ENCODE measurements at regions of chr19 and their contacts with region 1.

Region 1: GRCh38 chr19:52237771-52238400 is 31.5 kb upstream of the ZNF766 start:
- DNase-seq: peak; percentile 19
- ATAC-seq: peak; percentile 79
- H3K4me3 ChIP-seq: no peak overlapping the region
- H3K27ac ChIP-seq: no peak overlapping the region
- H3K4me1 ChIP-seq: no peaks in the 10 kb centered on the region
- H3K27me3 ChIP-seq: no peaks in the 10 kb centered on the region
- CTCF ChIP-seq: peak; percentile 83 to 89 (median 88)
- EP300 ChIP-seq: no peak
- POLR2A ChIP-seq: no peak
- RAD21 ChIP-seq: peak; percentile 86

Region 2: DNA sequence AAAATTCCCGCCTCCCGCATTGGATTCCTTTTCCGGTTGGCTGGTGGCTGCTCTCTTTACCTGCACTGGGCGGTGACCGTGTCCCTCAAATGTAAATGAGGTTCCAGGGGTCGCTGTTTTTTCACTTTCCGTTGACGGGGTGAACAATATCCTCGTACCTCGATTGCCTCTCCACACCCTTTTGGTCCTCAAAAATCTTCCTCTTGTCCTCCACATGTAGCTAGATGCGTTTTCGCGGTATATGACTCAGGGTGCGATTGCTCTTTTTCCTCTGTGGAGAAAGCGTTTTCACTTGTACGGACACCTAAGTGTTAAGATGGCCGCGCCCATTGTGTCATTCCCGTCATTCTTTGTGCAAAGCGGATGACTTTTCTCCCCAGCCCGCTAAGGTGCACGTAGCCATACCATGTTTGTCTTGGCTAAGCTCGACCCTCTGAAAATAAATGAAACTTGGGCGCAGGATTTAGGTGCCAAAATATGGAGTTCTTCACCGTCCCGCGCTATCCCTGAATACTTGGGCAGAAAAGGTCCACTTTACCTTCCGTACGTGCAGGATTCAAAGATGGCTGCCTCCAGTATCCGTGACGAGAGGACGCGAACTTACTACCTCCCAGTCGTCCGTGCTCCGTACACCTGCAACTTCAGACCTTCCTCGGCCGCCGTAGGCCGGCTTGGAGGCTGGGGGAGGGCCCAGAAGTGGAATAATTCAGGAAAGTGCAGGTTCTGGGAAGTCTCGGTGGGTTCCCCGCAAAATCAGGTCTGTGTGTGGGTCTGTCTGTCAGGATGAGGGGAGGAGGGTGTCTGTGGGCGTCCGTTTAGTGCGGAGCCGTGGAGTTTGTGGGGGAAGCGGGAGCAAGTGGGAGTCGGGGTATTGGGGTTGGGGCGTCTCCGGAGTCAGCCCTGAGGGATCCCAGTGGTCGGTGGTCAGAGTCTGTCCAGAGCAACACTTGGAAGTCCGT is 310.8 kb before region 1 on chr19 and contains the start of gene ZNF613:
- CTCF ChIA-PET with region 1: no interaction called
- POLR2A ChIA-PET with region 1: no interaction called
- RAD21 ChIA-PET with region 1: no interaction called
- SMC1A ChIA-PET with region 1: no interaction called
- in situ Hi-C with region 1: no loop called
- intact Hi-C with region 1: loop called (anchors 5 kb)
- DNase-seq: peak; percentile 89
- ATAC-seq: peak; percentile 97
- H3K4me3 ChIP-seq: peak within 1 kb of the TSS; percentile 77
- H3K27ac ChIP-seq: peak within 1 kb of the TSS; percentile 70
- H3K4me1 ChIP-seq: 0 out of 2 replicates have a peak, but pooled peaks cover 2% of the 10 kb centered on the region
- H3K27me3 ChIP-seq: no peaks in the 10 kb centered on the region
- CTCF ChIP-seq: peak in 2 of 3 experiments; percentile 5 to 22; a peak in 1 of 6 replicates
- EP300 ChIP-seq: no peak
- POLR2A ChIP-seq: peak; percentile 24
- RAD21 ChIP-seq: no peak
- polyA plus RNA-seq, gene ZNF613: 3.3 to 5.1 TPM

Region 3: DNA sequence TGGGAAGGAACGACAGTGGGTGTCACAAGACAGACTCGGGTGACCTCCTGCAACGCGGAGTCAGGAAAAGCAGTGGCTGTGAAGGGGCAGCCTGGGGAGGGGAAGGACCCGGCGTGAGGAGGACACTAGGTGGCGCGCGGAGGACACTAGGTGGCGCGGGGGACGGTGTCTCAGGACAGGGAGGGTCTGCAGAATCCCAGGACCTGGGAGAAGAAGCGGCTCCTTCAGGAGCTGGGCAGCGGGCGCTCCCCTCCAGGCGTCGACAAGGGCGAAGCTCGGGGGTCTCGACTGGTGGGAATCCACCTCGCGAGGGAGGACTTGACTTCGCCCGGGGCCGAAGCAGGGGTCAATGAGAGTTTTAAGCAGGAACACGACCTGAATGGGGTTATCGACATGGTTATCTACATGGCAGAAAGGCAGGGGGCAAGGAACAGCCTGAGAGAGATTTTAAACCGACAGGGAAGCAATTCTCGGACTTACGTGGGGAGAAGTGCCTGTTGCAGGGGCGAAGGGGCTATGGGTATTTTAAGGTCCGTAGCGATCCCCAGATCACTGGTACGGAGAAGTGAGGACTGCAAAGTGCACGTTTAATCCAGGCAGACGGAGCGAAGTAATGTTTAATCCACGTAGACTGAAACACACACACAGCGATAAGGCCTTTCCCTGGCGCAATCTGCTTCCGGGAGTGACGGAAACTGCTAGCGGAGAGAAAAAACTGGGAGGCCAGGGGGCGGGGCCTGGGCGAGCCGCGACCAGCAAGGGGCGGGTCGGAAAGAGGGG is 98.4 kb before region 1 on chr19 and contains the start of gene ZNF616:
- CTCF ChIA-PET with region 1: interaction called, 52 read pairs
- POLR2A ChIA-PET with region 1: no interaction called
- RAD21 ChIA-PET with region 1: interaction called, 8 read pairs
- SMC1A ChIA-PET with region 1: interaction called, 21 read pairs
- in situ Hi-C with region 1: loop called (anchors 5 kb)
- intact Hi-C with region 1: loop called (anchors 1 kb)
- DNase-seq: peak; percentile 71
- ATAC-seq: peak; percentile 97
- H3K4me3 ChIP-seq: peak within 1 kb of the TSS; percentile 99
- H3K27ac ChIP-seq: peak within 1 kb of the TSS; percentile 84
- H3K4me1 ChIP-seq: peaks cover 5% of the 10 kb centered on the region
- H3K27me3 ChIP-seq: no peaks in the 10 kb centered on the region
- CTCF ChIP-seq: peak; percentile 67 to 88 (median 82)
- EP300 ChIP-seq: no peak
- POLR2A ChIP-seq: peak; percentile 71
- RAD21 ChIP-seq: peak; percentile 62
- polyA plus RNA-seq, gene ZNF616: 1.1 to 1.4 TPM

Region 4: DNA sequence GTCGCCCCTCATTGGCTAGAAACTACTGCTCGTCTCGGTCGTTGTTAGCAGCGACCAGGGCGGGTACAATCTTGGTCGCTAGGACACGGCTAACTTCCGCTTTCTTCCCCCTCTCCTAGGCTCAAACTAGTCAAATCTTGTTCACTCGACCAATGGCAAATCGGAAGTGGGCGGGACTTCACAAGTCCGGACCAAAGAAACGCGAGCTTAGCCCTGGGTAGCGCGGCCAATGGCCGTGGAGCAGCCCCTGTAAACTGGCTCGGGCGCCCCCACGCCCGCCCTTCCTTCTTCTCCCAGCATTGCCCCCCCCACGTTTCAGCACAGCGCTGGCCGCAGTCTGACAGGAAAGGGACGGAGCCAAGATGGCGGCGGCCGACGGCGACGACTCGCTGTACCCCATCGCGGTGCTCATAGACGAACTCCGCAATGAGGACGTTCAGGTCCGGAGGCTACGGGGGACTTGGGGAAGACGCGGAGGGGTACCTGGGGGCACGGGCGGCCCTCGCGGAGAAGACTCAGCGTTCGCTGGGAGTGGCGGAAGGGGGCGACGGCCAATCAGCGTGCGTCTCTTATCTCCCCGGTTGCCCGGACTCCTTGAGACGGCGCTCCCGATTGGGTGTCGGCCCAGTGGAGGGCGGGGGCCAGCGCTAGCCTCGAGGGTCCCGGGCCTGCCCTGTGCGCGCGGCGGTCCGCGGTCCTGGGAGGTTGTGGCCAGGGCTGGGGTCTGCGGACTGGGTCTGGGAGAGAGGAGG is 48.0 kb before region 1 on chr19 and contains the start of gene PPP2R1A:
- CTCF ChIA-PET with region 1: interaction called, 14 read pairs
- POLR2A ChIA-PET with region 1: no interaction called
- RAD21 ChIA-PET with region 1: interaction called, 8 read pairs
- SMC1A ChIA-PET with region 1: interaction called, 5 read pairs
- in situ Hi-C with region 1: no loop called
- intact Hi-C with region 1: no loop called
- DNase-seq: peak; percentile 100
- ATAC-seq: peak; percentile 92
- H3K4me3 ChIP-seq: peak within 1 kb of the TSS; percentile 91
- H3K27ac ChIP-seq: peak within 1 kb of the TSS; percentile 98
- H3K4me1 ChIP-seq: no peaks in the 10 kb centered on the region; the same call in 1 of the 2 replicates
- H3K27me3 ChIP-seq: no peaks in the 10 kb centered on the region
- CTCF ChIP-seq: no peak
- EP300 ChIP-seq: no peak
- POLR2A ChIP-seq: peak; percentile 97
- RAD21 ChIP-seq: no peak
- polyA plus RNA-seq, gene PPP2R1A: 16.0 to 29.2 TPM

Region 5: GRCh38 chr19:52214186-52214585 is 23.7 kb before region 1 on chr19:
- CTCF ChIA-PET with region 1: no interaction called
- POLR2A ChIA-PET with region 1: no interaction called
- RAD21 ChIA-PET with region 1: no interaction called
- SMC1A ChIA-PET with region 1: no interaction called
- in situ Hi-C with region 1: no loop called
- intact Hi-C with region 1: no loop called
- DNase-seq: no peak
- ATAC-seq: no peak
- H3K4me3 ChIP-seq: no peak overlapping the region
- H3K27ac ChIP-seq: no peak overlapping the region
- H3K4me1 ChIP-seq: no peaks in the 10 kb centered on the region
- H3K27me3 ChIP-seq: no peaks in the 10 kb centered on the region
- CTCF ChIP-seq: no peak
- EP300 ChIP-seq: no peak
- POLR2A ChIP-seq: no peak
- RAD21 ChIP-seq: no peak

Measured in GM12878 (cell line).